ENCODE measurements at regions of chr10 and their contacts with region 1.

Region 1: DNA sequence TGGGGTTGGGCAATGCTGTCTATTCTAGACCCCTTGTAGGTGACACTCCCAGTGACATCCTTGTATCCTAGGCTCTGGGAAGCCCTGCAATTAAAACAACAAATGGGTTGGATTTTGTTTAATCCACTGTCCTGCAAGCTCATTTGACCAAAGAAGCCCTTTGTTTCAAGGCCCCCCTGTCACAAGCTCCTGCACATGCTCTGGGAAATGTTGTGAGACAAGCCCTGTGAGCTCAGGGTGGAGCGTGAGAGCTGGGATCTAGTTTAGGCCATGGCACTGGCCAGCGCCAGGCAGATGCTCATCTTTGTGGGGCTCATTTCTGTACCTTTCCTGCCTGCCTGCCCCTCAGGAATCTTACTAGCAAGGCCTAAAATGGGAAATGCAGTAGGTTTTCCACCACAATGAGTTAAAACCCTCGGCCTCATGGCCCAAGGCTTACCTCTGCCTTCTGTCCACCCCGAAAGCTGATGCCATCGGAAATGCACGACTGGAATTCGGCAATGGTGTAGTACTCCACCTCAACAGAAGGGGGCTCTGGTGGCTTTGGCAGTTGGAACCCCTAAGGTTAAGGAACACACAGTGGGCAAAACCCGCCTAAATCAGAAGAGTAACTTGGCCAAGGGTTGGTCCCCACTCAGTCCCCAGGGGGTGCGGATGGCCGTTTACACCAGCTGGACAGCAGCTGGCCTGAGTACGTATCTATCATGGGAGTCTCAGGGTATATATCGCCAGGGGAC is 112.0 kb downstream of the NEURL1 start:
- DNase-seq: peak in 6 of 9 experiments; percentile 29 to 61 (median 42)
- ATAC-seq: peak; percentile 68
- H3K4me3 ChIP-seq: no peak overlapping the region
- H3K4me3 Mint-ChIP-seq: no peak overlapping the region
- H3K27ac ChIP-seq: no peak overlapping the region
- H3K27ac Mint-ChIP-seq: no peak overlapping the region
- H3K4me1 ChIP-seq: no peaks in the 10 kb centered on the region
- H3K4me1 Mint-ChIP-seq: no peaks in the 10 kb centered on the region
- H3K27me3 ChIP-seq: no peaks in the 10 kb centered on the region
- H3K27me3 Mint-ChIP-seq: no peaks in the 10 kb centered on the region
- CTCF ChIP-seq: peak; percentile 67

Region 2: DNA sequence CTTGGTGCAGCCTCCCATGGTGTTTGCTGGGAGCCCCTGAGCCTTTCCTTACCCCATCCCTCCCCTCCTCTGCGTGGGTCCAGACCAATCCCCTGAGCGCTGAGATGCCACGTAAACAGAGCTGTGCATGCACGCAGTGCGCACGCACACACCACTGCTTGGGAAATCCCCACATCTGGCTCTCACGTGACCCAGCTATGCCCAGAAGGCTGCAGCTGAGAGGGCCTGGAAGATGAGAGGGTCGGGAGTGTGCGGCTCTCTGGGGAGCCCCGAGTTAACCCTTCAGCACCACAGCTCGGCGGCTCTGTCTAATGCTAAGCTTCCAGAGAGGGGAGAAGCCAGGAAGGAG is 72.6 kb after region 1 on chr10:
- CTCF ChIA-PET with region 1: interaction called, 80 read pairs
- POLR2A ChIA-PET with region 1: no interaction called
- intact Hi-C with region 1: no loop called
- DNase-seq: peak; percentile 66 to 98 (median 80)
- ATAC-seq: peak; percentile 97
- H3K4me3 ChIP-seq: peak overlapping the region; percentile 54 to 56
- H3K4me3 Mint-ChIP-seq: peak overlapping the region; percentile 85
- H3K27ac ChIP-seq: peak overlapping the region; percentile 45 to 93
- H3K27ac Mint-ChIP-seq: peak overlapping the region; percentile 94
- H3K4me1 ChIP-seq: peaks cover 26% of the 10 kb centered on the region
- H3K4me1 Mint-ChIP-seq: peaks cover 20% of the 10 kb centered on the region
- H3K27me3 ChIP-seq: no peaks in the 10 kb centered on the region
- H3K27me3 Mint-ChIP-seq: no peaks in the 10 kb centered on the region
- CTCF ChIP-seq: no peak

Region 3: DNA sequence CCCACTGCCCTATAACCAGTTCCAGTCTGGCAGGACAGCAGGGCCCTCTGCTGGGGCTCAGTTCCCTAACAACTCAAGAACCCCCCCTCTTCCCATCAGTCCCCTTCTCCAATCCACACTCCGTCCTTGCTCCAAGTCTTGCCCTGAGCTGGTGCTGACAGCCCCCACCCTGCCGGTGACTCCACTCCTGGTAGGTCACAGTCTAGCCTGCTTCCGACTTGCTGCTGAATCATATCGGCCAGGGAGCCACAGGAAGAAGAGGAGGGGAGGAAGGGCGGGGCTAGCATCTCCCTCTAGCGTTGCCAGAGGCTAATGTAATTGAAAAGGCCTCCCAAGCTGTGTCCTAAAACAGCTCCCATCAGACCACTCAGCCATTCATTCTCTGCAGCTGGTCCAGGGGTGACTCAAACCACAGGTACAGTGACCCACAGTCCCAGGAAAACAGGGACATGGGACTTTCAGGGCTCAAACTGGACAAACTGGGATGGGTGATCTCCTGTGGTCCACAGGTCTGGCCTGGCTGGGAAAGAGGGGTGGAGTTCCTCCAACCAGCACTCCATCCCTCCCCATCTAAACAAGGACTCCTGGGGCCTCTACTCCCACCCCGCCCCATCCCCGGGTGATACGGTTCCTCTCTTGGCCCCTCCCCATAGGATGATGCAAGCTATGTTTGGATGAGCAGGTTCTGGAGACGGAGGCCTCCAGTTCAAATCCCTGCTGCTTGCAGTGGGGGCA is 91.1 kb after region 1 on chr10:
- CTCF ChIA-PET with region 1: interaction called, 14 read pairs
- POLR2A ChIA-PET with region 1: no interaction called
- intact Hi-C with region 1: no loop called
- DNase-seq: peak; percentile 15 to 73 (median 63)
- ATAC-seq: peak; percentile 70
- H3K4me3 ChIP-seq: no peak overlapping the region
- H3K4me3 Mint-ChIP-seq: peak overlapping the region; percentile 23
- H3K27ac ChIP-seq: no peak overlapping the region
- H3K27ac Mint-ChIP-seq: peak overlapping the region; percentile 85
- H3K4me1 ChIP-seq: peaks cover 26% of the 10 kb centered on the region
- H3K4me1 Mint-ChIP-seq: peaks cover 22% of the 10 kb centered on the region
- H3K27me3 ChIP-seq: no peaks in the 10 kb centered on the region
- H3K27me3 Mint-ChIP-seq: peaks cover 5% of the 10 kb centered on the region
- CTCF ChIP-seq: no peak

Region 4: GRCh38 chr10:103859161-103860086 is 253.9 kb after region 1 on chr10:
- CTCF ChIA-PET with region 1: no interaction called
- POLR2A ChIA-PET with region 1: no interaction called
- intact Hi-C with region 1: loop called in 1 of 2 experiments (anchors 10 kb)
- DNase-seq: peak; percentile 29 to 70 (median 54)
- ATAC-seq: peak; percentile 67
- H3K4me3 ChIP-seq: no peak overlapping the region
- H3K4me3 Mint-ChIP-seq: no peak overlapping the region
- H3K27ac ChIP-seq: no peak overlapping the region
- H3K27ac Mint-ChIP-seq: no peak overlapping the region
- H3K4me1 ChIP-seq: peaks cover 7% of the 10 kb centered on the region
- H3K4me1 Mint-ChIP-seq: peaks cover 9% of the 10 kb centered on the region
- H3K27me3 ChIP-seq: peaks cover 0 to 7% of the 10 kb centered on the region in 2 experiments
- H3K27me3 Mint-ChIP-seq: peaks cover 17% of the 10 kb centered on the region
- CTCF ChIP-seq: peak; percentile 67

Measured in CD8-positive, alpha-beta T cell (primary cell).